ENCODE measurements at regions of chr2 and their contacts with region 1.

Region 1: GRCh38 chr2:207352978-207353671 is 176.6 kb upstream of the CREB1 start:
- DNase-seq: peak in 1 of 2 donors; percentile 52
- ATAC-seq: peak; percentile 54 to 78 (median 67)
- H3K4me3 ChIP-seq: no peak overlapping the region
- H3K4me3 Mint-ChIP-seq: no peak overlapping the region
- H3K27ac ChIP-seq: no peak overlapping the region
- H3K27ac Mint-ChIP-seq: no peak overlapping the region
- H3K4me1 ChIP-seq: peaks cover 8% of the 10 kb centered on the region
- H3K4me1 Mint-ChIP-seq: peaks cover 10% of the 10 kb centered on the region in 2 donors
- H3K27me3 ChIP-seq: no peaks in the 10 kb centered on the region
- H3K27me3 Mint-ChIP-seq: peaks cover 2 to 11% of the 10 kb centered on the region in 2 donors
- CTCF ChIP-seq: no peak

Region 2: DNA sequence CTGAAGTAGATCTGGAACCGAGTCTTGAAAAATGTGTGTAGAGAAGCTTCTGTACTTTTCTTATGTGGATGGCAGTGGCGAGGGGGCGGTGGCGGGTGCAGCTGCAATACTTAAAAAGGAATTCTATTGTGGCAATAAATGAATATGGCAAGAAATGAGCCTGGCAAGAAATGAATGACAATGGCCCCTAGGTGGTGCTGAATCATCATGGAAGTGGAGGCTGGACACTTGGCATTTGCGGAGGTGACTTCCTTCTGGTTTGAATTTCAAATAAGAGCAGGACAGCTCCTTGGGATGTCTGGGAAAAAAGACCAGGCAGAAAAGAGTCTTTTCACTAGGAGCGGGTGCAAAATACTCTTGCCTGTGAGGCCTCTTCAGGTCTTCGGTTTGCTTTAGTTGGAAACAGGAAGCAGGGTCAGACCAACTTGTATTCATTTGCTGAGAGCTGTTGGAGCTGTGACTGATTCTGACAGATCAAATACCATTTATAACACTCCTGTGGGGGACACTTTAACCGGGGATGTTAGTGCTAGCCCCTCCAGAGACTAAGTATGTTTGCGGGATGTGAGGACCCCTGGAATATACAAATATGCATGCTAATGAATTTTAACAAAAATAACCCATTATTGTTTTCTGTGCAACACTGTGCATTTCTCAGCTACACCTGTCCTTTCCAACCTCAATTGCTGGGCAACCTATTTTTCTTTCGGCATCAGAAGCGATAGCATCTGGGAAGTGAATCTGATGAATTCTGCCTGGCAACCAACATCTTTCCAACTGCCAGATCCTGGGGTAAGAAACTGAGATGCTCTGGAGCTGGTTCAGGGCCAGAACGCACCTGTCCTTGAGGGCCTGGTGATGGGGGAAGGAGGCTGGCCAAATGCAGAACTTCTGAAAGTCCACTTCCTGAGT is 552.4 kb before region 1 on chr2:
- intact Hi-C with region 1: loop called (anchors 10 kb)
- DNase-seq: peak; percentile 19 to 73
- ATAC-seq: peak; percentile 30 to 69 (median 69)
- H3K4me3 ChIP-seq: no peak overlapping the region
- H3K4me3 Mint-ChIP-seq: peak overlapping the region; percentile 75
- H3K27ac ChIP-seq: no peak overlapping the region
- H3K27ac Mint-ChIP-seq: peak overlapping the region in 1 of 2 donors; percentile 76
- H3K4me1 ChIP-seq: peaks cover 4% of the 10 kb centered on the region
- H3K4me1 Mint-ChIP-seq: peaks cover 7% of the 10 kb centered on the region in 2 donors
- H3K27me3 ChIP-seq: no peaks in the 10 kb centered on the region
- H3K27me3 Mint-ChIP-seq: peaks cover 0 to 4% of the 10 kb centered on the region in 2 donors
- CTCF ChIP-seq: peak; percentile 67

Region 3: GRCh38 chr2:207216457-207216856 is 136.7 kb before region 1 on chr2:
- intact Hi-C with region 1: no loop called
- DNase-seq: no peak
- ATAC-seq: no peak
- H3K4me3 ChIP-seq: no peak overlapping the region
- H3K4me3 Mint-ChIP-seq: no peak overlapping the region
- H3K27ac ChIP-seq: no peak overlapping the region
- H3K27ac Mint-ChIP-seq: no peak overlapping the region
- H3K4me1 ChIP-seq: no peaks in the 10 kb centered on the region
- H3K4me1 Mint-ChIP-seq: no peaks in the 10 kb centered on the region
- H3K27me3 ChIP-seq: no peaks in the 10 kb centered on the region
- H3K27me3 Mint-ChIP-seq: peaks cover 9 to 51% of the 10 kb centered on the region in 2 donors
- CTCF ChIP-seq: no peak

Measured in natural killer cell (primary cell).